KBM-7 (cell line): ENCODE measurements at regions of chr17 and their contacts with region 1.

Region 1: DNA sequence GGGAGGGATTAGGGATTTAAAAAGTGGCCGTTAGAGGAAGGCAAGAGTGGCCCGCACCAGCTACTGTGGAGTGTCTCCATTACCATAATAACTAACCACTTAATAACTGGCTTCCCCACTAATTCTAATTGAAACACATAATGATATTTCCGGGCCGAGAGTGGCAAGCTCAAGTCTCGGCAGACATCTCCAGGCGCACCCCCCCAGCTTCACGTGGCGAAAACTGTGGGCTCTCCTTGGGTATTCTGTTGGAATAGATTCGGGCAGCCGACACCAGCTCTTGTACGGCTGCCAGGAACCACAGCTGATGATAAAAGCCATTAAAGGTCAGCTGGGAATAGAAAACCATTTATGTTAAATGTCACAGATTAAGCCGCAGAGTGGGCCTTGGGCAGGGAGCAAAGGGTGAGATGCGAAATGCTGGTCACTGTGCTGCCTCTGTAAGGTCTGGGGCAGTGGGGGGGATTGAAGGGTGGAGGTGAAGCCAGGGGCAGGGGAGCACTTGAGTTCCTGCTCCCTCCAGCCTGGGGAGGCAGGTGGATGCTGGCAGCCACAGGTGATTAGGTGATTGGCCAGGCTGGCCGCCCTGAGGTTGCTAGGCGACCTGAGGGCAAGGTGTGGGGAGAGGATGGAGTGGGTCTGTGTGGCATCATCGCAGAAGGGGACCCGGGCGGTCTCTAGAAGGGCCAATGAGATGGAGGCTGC is 115.6 kb upstream of the SDK2 start:
- DNase-seq: no peak

Region 2: DNA sequence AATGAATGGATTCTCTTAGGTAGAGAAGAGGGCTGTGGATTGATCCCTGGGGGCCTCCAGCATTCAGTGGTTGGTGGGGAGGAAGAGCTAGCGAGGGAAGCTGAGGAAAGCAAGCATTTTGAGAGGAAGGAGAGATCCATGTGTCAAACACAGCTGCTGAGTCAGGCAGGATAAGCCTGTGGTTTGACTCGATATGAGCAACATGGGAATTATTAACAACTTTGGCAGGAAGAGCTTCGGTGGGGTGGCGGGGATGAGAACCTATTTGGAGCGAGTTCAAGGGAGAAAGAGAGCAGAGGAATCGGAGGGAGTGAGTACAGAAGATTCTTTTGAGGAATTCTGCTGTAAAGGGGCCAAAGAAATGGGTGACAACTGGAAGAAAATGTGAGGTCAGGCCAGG is 388.6 kb before region 1 on chr17:
- in situ Hi-C with region 1: no loop called
- DNase-seq: no peak

Region 3: GRCh38 chr17:73657473-73658116 is 102.3 kb before region 1 on chr17:
- in situ Hi-C with region 1: no loop called
- DNase-seq: peak; percentile 40

Region 4: DNA sequence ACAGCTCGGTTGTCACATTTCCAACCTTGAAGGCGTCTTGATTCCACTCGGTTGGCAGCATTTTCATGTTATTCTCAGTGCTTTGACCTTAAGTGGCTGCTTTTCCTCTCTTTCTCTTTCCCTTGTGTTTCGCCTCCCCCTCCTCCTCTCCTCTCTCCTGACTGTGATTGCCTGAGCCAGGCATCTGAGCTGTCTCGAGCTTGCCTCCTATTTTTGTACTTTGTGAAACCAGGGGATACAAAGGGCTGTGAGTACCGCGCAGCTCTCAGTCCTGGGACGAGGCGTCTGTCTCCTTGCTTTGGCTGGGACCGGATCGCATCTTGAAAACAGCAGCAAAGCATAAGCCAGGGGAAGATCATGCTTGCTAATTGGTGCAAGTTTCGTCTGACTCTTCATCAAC is 66.8 kb before region 1 on chr17:
- in situ Hi-C with region 1: no loop called
- DNase-seq: no peak

Region 5: GRCh38 chr17:73705594-73705993 is 54.3 kb before region 1 on chr17:
- in situ Hi-C with region 1: loop called (anchors 10 kb)
- DNase-seq: no peak